Left cardiac atrium (tissue), 4 donors: ENCODE measurements at regions of chr3 and their contacts with region 1.

Region 1: DNA sequence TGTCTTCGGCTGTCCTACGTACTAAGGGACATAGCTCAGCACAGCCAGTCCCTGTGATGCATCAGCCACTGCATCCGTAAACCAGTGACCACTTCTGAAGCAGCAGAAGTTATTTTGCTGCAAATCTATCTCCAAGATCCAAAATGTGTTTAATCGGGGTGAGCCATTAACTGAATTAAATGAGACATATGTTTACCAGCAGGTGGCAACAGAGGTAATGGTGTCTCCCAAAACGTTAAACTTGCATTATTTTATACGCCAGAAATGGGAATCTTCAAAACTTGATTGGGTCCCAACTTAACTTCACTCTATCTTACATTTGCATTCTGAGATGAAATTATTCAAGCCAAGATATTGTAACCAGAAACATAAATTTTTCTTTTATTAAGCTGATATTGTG is 75.3 kb upstream of the BOC start:
- DNase-seq: no peak
- ATAC-seq: peak in 1 of 2 donors; percentile 21

Region 2: GRCh38 chr3:113051302-113051711 is 84.8 kb before region 1 on chr3:
- intact Hi-C with region 1: loop called in 1 of 2 experiments (anchors 1 kb)
- DNase-seq: peak; percentile 80
- ATAC-seq: peak; percentile 93 to 97

Region 3: GRCh38 chr3:113211330-113212149 is 75.5 kb after region 1 on chr3 and contains the start of gene BOC:
- intact Hi-C with region 1: loop called in 1 of 2 experiments (anchors 5 kb)
- DNase-seq: peak; percentile 43
- ATAC-seq: peak; percentile 81 to 92
- total RNA-seq, gene BOC: 14.5 to 16.3 TPM

Region 4: DNA sequence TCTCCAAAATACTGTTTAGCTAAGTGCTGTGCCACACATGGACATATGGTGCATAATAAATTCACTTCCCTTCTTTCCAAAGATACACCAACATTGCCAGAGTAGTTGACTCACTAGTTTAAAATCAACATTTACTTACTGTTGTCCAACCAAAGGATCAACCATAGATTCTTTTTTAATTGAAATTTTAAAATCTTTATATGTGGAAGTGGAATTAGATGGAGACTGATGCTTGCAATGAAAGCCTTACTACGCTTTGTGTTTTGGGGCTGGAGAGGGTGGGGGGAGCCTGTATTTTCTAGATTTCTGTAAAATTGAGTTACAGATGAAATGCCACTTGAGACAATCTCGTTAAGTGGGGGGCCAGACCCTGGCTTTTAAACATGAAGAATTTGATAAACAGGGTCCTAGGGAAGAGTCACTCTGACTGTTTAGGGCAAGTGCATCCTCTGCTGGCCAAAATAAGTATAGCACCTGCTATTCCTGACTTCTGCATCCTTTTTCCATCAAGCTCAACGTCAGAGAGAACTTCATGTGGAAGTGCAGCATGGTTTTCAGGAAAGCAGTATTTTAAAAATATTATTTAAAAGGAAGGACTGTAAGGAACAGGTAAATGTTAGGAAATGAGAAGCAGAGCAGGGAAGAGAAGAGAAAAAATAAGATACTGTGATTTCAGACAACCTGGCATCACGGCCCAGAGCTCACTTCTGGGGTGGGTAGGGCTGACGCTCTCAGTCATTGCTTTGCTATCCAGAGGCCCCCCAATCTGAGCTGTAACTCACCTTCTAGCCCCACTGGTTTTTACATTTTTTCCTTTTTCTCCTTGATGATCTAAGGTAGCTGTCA is 152.0 kb after region 1 on chr3:
- intact Hi-C with region 1: loop called in 1 of 2 experiments (anchors 1 kb)
- DNase-seq: no peak
- ATAC-seq: peak in 1 of 2 donors; percentile 53